SK-N-SH (cell line): ENCODE measurements at regions of chr4 and their contacts with region 1.

Region 1: GRCh38 chr4:40309250-40309774 is 25.8 kb upstream of the CHRNA9 start:
- DNase-seq: peak; percentile 70
- H3K4me3 ChIP-seq: peak overlapping the region; percentile 13 to 32; a peak in 2 of 4 replicates
- H3K27ac ChIP-seq: no peak overlapping the region
- H3K4me1 ChIP-seq: peaks cover 0 to 2% of the 10 kb centered on the region in 2 experiments; a peak in 1 of 4 replicates
- H3K27me3 ChIP-seq: no peaks in the 10 kb centered on the region
- CTCF ChIP-seq: peak; percentile 90
- EP300 ChIP-seq: no peak
- RAD21 ChIP-seq: peak; percentile 84

Region 2: DNA sequence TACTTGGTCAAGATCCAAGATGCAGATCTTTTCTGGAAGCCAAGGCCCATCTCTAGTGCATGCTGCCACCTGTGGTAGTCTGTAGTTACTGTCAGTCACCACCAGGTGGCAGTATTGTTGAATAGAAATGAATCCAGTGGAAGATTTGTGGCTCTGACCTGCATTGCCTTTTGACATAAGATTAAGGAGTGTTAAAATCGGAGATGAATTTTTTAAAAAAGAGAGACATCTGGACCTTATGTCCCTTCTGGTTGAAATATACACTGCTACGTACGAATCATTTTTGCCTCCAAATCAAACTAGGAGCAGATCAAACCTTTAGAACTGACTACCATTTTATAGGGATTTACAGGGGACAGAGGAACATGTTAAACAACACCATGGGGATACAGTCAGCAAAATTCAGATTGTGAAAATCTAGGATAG is 159.3 kb before region 1 on chr4:
- CTCF ChIA-PET with region 1: interaction called, 10 read pairs
- POLR2A ChIA-PET with region 1: no interaction called
- DNase-seq: peak; percentile 65
- H3K4me3 ChIP-seq: no peak overlapping the region
- H3K27ac ChIP-seq: no peak overlapping the region
- H3K4me1 ChIP-seq: no peaks in the 10 kb centered on the region; a peak in 2 of 4 replicates
- H3K27me3 ChIP-seq: no peaks in the 10 kb centered on the region
- CTCF ChIP-seq: peak; percentile 86
- EP300 ChIP-seq: no peak
- RAD21 ChIP-seq: peak; percentile 84

Region 3: GRCh38 chr4:40205259-40206198 is 103.8 kb before region 1 on chr4:
- CTCF ChIA-PET with region 1: no interaction called
- POLR2A ChIA-PET with region 1: no interaction called
- DNase-seq: no peak
- H3K4me3 ChIP-seq: no peak overlapping the region
- H3K27ac ChIP-seq: no peak overlapping the region
- H3K4me1 ChIP-seq: peaks cover 4 to 5% of the 10 kb centered on the region in 2 experiments; a peak in 3 of 4 replicates
- H3K27me3 ChIP-seq: no peaks in the 10 kb centered on the region
- CTCF ChIP-seq: no peak
- EP300 ChIP-seq: 0 out of 4 replicates have a peak, but pooled peaks of 1 of the 2 experiments have one; percentile 16
- RAD21 ChIP-seq: no peak

Region 4: GRCh38 chr4:40325189-40326019 is 16.1 kb after region 1 on chr4:
- CTCF ChIA-PET with region 1: interaction called, 44 read pairs
- POLR2A ChIA-PET with region 1: interaction called, 4 read pairs
- DNase-seq: peak; percentile 67
- H3K4me3 ChIP-seq: no peak overlapping the region
- H3K27ac ChIP-seq: peak overlapping the region in 1 of 2 experiments; percentile 9; a peak in 1 of 4 replicates
- H3K4me1 ChIP-seq: peaks cover 13% of the 10 kb centered on the region in 2 experiments; a peak in 3 of 4 replicates
- H3K27me3 ChIP-seq: no peaks in the 10 kb centered on the region
- CTCF ChIP-seq: peak; percentile 91
- EP300 ChIP-seq: peak in 1 of 2 experiments; percentile 17; a peak in 1 of 4 replicates
- RAD21 ChIP-seq: peak; percentile 85